CD4-positive, alpha-beta memory T cell (primary cell): ENCODE measurements at regions of chr6 and their contacts with region 1.

Region 1: DNA sequence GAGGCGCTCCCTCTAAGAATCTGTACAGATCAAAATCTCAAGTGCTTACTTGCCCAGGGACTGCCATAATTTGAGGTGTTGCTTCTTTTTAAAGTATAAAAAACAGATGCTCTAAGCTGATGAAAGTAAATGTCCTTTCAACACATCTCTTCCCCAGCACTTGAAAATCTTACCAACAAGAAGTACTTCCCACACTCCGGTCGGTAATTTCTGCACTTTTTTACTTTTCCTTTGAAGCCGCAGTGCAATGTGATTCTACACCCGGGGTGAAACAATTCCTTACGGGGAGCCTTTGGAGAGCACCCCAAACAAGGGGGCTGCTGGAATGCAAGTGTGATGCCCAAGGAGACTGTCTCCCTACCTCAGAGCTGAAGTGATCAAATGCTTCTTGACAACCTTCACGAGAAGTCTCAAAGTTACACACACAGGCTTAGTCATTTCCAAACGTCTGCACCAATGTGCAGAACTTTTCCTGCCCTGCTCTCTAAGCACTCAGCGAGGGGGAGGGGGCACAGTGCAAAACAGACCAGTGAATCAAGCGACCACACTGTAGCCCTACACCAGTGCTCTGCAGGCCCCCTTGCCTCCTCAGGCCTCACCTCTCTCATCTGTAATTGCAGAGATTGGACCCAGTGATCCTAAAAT is 56.7 kb downstream of the ATXN1 start:
- DNase-seq: peak in 1 of 5 donors; percentile 66
- H3K4me3 ChIP-seq: peak overlapping the region; percentile 36 to 42
- H3K4me3 Mint-ChIP-seq: peak overlapping the region; percentile 78 to 91 (median 82)
- H3K27ac ChIP-seq: peak overlapping the region; percentile 12
- H3K27ac Mint-ChIP-seq: peak overlapping the region; percentile 81 to 93 (median 84)
- H3K4me1 ChIP-seq: peaks cover 63% of the 10 kb centered on the region
- H3K4me1 Mint-ChIP-seq: peaks cover 53 to 87% (median 63%) of the 10 kb centered on the region in 4 donors
- H3K27me3 ChIP-seq: no peaks in the 10 kb centered on the region
- H3K27me3 Mint-ChIP-seq: no peaks in the 10 kb centered on the region

Region 2: GRCh38 chr6:16651871-16652270 is 52.7 kb before region 1 on chr6:
- CTCF ChIA-PET with region 1: interaction called, 10 read pairs
- POLR2A ChIA-PET with region 1: interaction called, 38 read pairs
- intact Hi-C with region 1: no loop called
- DNase-seq: peak; percentile 65 to 83 (median 79)
- H3K4me3 ChIP-seq: peak overlapping the region in 1 of 2 donors; percentile 6
- H3K4me3 Mint-ChIP-seq: peak overlapping the region; percentile 39 to 78 (median 70)
- H3K27ac ChIP-seq: peak overlapping the region; percentile 38
- H3K27ac Mint-ChIP-seq: peak overlapping the region; percentile 89 to 99 (median 93)
- H3K4me1 ChIP-seq: peaks cover 63% of the 10 kb centered on the region
- H3K4me1 Mint-ChIP-seq: peaks cover 46 to 66% (median 54%) of the 10 kb centered on the region in 4 donors
- H3K27me3 ChIP-seq: no peaks in the 10 kb centered on the region
- H3K27me3 Mint-ChIP-seq: no peaks in the 10 kb centered on the region

Region 3: DNA sequence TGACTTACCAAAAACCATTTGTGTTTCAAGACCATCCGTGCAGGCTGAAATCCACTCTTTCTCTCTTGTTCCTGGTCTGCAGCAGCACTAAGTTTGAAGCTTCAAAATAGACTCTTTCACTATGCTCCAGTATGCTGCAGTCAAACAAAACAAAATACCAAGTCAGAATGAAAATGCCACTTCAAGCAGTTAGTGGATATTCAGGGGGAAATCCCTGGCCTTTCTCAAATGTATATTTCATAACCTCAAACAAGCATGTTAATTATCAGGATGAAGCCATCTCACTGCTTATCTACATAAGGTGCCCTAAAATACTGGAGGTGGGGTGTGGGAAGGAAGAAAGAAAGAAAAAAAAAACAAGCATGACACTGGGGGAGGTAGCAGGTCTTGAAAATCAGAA is 46.8 kb before region 1 on chr6:
- CTCF ChIA-PET with region 1: interaction called, 4 read pairs
- POLR2A ChIA-PET with region 1: interaction called, 52 read pairs
- intact Hi-C with region 1: no loop called
- DNase-seq: peak in 3 of 5 donors; percentile 29 to 43 (median 31)
- H3K4me3 ChIP-seq: no peak overlapping the region
- H3K4me3 Mint-ChIP-seq: peak overlapping the region; percentile 55 to 85 (median 68)
- H3K27ac ChIP-seq: peak overlapping the region; percentile 44
- H3K27ac Mint-ChIP-seq: peak overlapping the region; percentile 77 to 95 (median 92)
- H3K4me1 ChIP-seq: peaks cover 75% of the 10 kb centered on the region
- H3K4me1 Mint-ChIP-seq: peaks cover 59 to 78% (median 66%) of the 10 kb centered on the region in 4 donors
- H3K27me3 ChIP-seq: no peaks in the 10 kb centered on the region
- H3K27me3 Mint-ChIP-seq: no peaks in the 10 kb centered on the region

Region 4: GRCh38 chr6:16670183-16670582 is 34.3 kb before region 1 on chr6:
- CTCF ChIA-PET with region 1: interaction called, 3 read pairs
- POLR2A ChIA-PET with region 1: interaction called, 65 read pairs
- intact Hi-C with region 1: loop called (anchors 2 kb)
- DNase-seq: no peak
- H3K4me3 ChIP-seq: no peak overlapping the region
- H3K4me3 Mint-ChIP-seq: peak overlapping the region; percentile 21 to 91 (median 76)
- H3K27ac ChIP-seq: peak overlapping the region; percentile 35
- H3K27ac Mint-ChIP-seq: peak overlapping the region; percentile 74 to 96 (median 92)
- H3K4me1 ChIP-seq: peaks cover 61% of the 10 kb centered on the region
- H3K4me1 Mint-ChIP-seq: peaks cover 50 to 69% (median 55%) of the 10 kb centered on the region in 4 donors
- H3K27me3 ChIP-seq: no peaks in the 10 kb centered on the region
- H3K27me3 Mint-ChIP-seq: no peaks in the 10 kb centered on the region

Region 5: DNA sequence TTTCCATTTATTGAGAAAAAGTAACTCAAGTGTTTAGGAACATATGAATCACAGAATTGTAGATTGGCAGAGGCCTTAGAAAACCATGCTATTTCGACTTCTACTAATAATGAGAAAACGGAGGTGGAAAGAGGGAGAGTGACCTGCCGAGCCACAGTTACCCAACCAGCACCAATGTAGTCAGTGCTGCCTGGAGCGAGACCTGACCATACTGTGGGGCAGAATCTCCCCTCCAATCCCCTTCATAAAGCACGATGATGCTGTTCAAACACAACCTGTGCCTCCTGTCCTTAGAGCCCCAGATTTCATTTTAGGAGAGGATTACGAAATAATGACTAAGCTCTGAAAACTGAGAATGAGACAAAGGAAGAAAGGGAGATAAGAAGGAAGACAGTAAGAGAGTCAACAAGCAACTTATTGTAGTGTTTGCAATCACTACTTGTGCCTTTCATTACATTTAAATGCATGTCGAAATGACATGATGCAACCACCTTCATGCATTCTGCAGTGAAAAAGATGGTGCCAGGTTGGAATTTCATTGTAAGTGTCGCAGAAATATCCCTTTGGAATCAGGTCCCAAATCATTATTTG is 13.8 kb before region 1 on chr6:
- CTCF ChIA-PET with region 1: interaction called, 29 read pairs
- POLR2A ChIA-PET with region 1: interaction called, 60 read pairs
- intact Hi-C with region 1: loop called (anchors 2 kb)
- DNase-seq: no peak
- H3K4me3 ChIP-seq: peak overlapping the region in 1 of 2 donors; percentile 3
- H3K4me3 Mint-ChIP-seq: peak overlapping the region; percentile 42 to 77 (median 71)
- H3K27ac ChIP-seq: peak overlapping the region; percentile 41
- H3K27ac Mint-ChIP-seq: peak overlapping the region; percentile 80 to 98 (median 90)
- H3K4me1 ChIP-seq: peaks cover 89% of the 10 kb centered on the region
- H3K4me1 Mint-ChIP-seq: peaks cover 53 to 97% (median 77%) of the 10 kb centered on the region in 4 donors
- H3K27me3 ChIP-seq: no peaks in the 10 kb centered on the region
- H3K27me3 Mint-ChIP-seq: no peaks in the 10 kb centered on the region